ENCODE measurements at regions of chr7 and their contacts with region 1.

Region 1: GRCh38 chr7:36670585-36671431 is 53.5 kb downstream of the AOAH start:
- DNase-seq: peak; percentile 85
- ATAC-seq: peak; percentile 94
- H3K4me3 Mint-ChIP-seq: no peak overlapping the region
- H3K27ac Mint-ChIP-seq: peak overlapping the region; percentile 63
- H3K4me1 Mint-ChIP-seq: peaks cover 33% of the 10 kb centered on the region
- H3K27me3 Mint-ChIP-seq: no peaks in the 10 kb centered on the region

Region 2: DNA sequence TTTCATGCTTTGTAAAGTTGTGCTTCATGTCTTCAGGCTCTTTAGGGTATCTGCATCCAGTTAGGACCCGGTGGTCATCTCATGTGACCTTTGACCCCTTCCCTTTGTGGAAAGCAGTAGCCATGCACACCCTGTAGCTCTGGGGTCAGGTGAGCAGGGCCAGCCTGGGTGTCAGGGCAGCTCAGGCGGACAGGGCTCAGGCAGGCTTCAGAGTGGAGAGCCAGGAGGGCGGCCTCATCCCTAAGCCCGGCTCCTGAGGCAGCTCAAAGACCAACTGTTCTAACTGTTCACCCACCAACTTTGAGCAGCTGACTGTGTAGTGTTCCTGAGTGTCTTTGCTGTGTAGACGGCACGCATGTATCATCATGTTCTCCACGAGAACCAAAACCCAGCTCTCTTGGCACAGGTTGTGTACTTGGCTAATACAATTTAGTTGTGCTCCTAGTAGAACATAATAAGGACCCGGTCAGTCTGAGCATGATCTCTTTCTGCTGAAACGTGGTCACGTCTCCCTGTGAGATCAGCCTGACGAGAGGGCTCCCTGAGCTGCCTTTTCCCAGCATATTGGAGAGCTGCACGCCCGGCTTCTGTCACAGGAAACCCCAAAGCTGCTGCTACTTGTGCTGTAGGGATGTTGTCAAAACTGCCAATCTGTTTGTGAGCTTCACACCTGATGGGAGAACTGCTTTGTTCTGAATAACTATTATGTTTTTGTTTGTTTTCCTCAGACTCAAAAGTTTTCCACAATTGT is 487.8 kb before region 1 on chr7:
- CTCF ChIA-PET with region 1: no interaction called
- POLR2A ChIA-PET with region 1: no interaction called
- DNase-seq: no peak
- ATAC-seq: no peak
- H3K4me3 Mint-ChIP-seq: no peak overlapping the region
- H3K27ac Mint-ChIP-seq: no peak overlapping the region
- H3K4me1 Mint-ChIP-seq: no peaks in the 10 kb centered on the region
- H3K27me3 Mint-ChIP-seq: no peaks in the 10 kb centered on the region

Region 3: GRCh38 chr7:36487756-36488336 is 183.0 kb before region 1 on chr7:
- CTCF ChIA-PET with region 1: interaction called, 100 read pairs
- POLR2A ChIA-PET with region 1: interaction called, 3 read pairs
- DNase-seq: peak; percentile 68
- ATAC-seq: peak; percentile 70
- H3K4me3 Mint-ChIP-seq: no peak overlapping the region
- H3K27ac Mint-ChIP-seq: no peak overlapping the region
- H3K4me1 Mint-ChIP-seq: peaks cover 3% of the 10 kb centered on the region
- H3K27me3 Mint-ChIP-seq: peaks cover 8% of the 10 kb centered on the region

Region 4: GRCh38 chr7:36659172-36659516 is 11.7 kb before region 1 on chr7:
- CTCF ChIA-PET with region 1: interaction called, 72 read pairs
- POLR2A ChIA-PET with region 1: no interaction called
- DNase-seq: no peak
- ATAC-seq: no peak
- H3K4me3 Mint-ChIP-seq: no peak overlapping the region
- H3K27ac Mint-ChIP-seq: no peak overlapping the region
- H3K4me1 Mint-ChIP-seq: peaks cover 19% of the 10 kb centered on the region
- H3K27me3 Mint-ChIP-seq: no peaks in the 10 kb centered on the region

Region 5: DNA sequence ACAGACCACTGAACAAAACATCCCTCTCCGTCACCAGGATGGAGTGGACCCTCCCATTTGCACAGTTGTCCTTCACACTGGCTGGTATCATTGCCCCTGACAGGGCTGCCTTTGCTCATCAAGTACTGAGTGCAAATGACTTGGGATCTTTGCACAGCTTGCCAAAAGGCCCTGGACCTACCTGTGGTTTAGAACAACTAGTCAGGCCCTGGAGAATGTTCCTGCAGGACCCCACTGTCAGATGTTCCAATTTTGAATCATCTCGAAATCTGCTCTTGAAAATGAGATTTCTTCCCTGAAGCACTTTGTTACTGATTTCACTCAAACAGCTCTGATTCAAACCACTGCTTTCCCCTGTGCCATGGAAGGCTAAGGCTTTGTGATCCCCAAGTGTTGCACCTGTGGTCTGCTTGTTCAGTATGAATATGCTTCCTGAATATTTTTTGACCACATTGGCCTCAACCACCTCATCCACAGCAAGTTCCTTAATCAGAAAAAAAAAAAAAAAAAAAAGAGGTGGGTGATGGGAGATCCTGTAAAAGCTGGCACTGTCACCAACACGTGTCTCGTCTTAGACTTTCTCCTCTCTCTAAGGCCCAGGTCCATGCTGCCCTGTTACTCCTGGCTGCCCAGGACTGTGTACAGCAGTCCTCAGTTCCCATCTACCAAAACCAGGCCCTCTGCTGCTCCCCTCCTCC is 56.1 kb after region 1 on chr7:
- CTCF ChIA-PET with region 1: interaction called, 11 read pairs
- POLR2A ChIA-PET with region 1: no interaction called
- DNase-seq: no peak
- ATAC-seq: no peak
- H3K4me3 Mint-ChIP-seq: no peak overlapping the region
- H3K27ac Mint-ChIP-seq: peak overlapping the region; percentile 77
- H3K4me1 Mint-ChIP-seq: peaks cover 58% of the 10 kb centered on the region
- H3K27me3 Mint-ChIP-seq: no peaks in the 10 kb centered on the region

Region 6: DNA sequence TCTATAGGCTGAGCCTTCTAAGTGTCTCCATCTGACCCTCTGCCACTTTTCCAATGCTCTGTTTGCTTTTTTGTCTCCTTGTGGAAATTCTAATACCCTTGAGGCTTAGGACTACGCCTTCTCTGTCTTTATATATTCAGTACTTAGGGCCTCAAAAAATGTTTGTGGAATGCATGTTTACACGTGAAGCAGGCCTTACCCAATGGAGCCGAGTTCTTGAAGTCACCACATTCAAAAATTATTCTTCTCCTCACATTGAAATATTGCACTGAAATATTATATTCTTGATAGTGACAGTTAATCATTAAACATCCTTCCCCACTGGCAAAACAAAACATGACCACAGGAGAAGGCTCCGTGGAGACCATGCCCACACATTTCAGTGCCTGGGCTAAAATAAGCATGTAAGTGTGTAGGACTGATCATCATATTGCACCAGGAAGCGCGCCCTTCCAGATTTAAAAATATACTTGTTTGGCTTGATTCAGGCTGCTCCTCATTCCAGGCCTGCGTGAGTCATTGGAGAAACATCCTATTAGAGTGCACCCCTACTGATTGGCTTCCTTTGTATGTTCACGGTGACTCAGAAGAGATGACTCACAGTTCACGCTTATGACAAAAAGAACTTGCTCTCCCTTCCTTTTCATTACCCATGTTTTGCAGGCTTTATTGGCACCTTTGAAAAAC is 360.9 kb after region 1 on chr7:
- CTCF ChIA-PET with region 1: no interaction called
- POLR2A ChIA-PET with region 1: no interaction called
- DNase-seq: peak; percentile 27
- ATAC-seq: peak; percentile 44
- H3K4me3 Mint-ChIP-seq: no peak overlapping the region
- H3K27ac Mint-ChIP-seq: no peak overlapping the region
- H3K4me1 Mint-ChIP-seq: peaks cover 29% of the 10 kb centered on the region
- H3K27me3 Mint-ChIP-seq: no peaks in the 10 kb centered on the region